ENCODE measurements at regions of chr1 and their contacts with region 1.

Region 1: GRCh38 chr1:186375088-186375953 is at the starts of genes ODR4 and TPR:
- DNase-seq: peak; percentile 98
- ATAC-seq: peak; percentile 89
- H3K4me3 Mint-ChIP-seq: peak within 1 kb of the TSS; percentile 99
- H3K27ac Mint-ChIP-seq: peak within 1 kb of the TSS; percentile 97
- H3K4me1 Mint-ChIP-seq: peaks cover 35% of the 10 kb centered on the region
- H3K27me3 Mint-ChIP-seq: no peaks in the 10 kb centered on the region
- total RNA-seq, gene ODR4: 10.7 to 12.2 TPM
- total RNA-seq, gene TPR: 130 to 139 TPM

Region 2: DNA sequence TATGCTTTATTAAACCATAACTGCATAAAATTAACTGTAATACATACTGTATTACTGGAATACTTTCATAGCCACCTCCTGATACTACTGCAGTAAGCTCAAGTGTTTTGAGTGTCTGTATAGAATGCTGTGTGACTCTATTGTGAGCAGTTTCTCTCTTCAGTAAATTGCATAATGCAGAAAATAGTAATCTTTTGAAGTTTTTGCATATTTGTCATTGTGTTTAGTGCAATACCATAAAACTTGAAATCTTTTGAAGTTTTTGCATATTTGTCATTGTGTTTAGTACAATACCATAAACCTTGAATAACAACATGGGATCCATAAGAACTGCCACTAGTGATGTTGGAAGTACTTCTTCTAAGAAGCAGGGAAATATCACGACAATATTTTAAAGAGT is 11.4 kb before region 1 on chr1:
- CTCF ChIA-PET with region 1: interaction called, 11 read pairs
- DNase-seq: no peak
- ATAC-seq: no peak
- H3K4me3 Mint-ChIP-seq: no peak overlapping the region
- H3K27ac Mint-ChIP-seq: no peak overlapping the region
- H3K4me1 Mint-ChIP-seq: peaks cover 2% of the 10 kb centered on the region
- H3K27me3 Mint-ChIP-seq: no peaks in the 10 kb centered on the region

Region 3: DNA sequence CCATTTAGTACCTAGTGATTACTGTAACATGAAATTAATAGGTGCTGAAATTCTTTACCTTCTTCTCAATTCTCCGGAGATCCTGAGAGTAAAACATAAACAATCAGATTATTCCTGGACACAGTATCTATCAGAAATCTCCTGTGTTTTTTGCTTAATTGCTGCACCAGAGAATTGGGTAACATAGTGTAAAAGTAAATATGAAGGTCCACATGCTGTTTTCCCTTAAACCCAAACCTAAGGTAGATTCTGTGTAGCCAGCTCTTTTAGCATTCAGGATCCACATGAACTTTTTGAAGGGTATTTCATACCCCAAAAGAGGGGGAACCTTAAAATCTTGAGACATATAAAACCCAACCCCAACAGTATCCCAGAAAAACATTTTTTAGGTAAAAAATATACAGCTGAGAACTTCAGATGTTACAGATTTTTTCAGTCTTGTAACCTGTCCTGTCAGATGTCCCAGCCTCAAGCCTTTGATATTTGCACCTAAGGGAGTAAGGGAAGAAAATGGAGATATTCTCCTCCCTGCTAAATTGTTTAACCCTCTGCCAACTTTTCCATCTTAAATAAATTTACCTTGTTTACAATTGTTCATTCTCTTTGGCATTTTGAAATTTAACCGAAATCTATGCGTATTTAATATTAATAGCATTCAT is 11.5 kb after region 1 on chr1:
- CTCF ChIA-PET with region 1: interaction called, 12 read pairs
- DNase-seq: no peak
- ATAC-seq: no peak
- H3K4me3 Mint-ChIP-seq: no peak overlapping the region
- H3K27ac Mint-ChIP-seq: no peak overlapping the region
- H3K4me1 Mint-ChIP-seq: peaks cover 2% of the 10 kb centered on the region
- H3K27me3 Mint-ChIP-seq: no peaks in the 10 kb centered on the region

Region 4: GRCh38 chr1:186404454-186405051 is 29.2 kb after region 1 on chr1:
- CTCF ChIA-PET with region 1: interaction called, 11 read pairs
- DNase-seq: no peak
- ATAC-seq: peak; percentile 70
- H3K4me3 Mint-ChIP-seq: no peak overlapping the region
- H3K27ac Mint-ChIP-seq: no peak overlapping the region
- H3K4me1 Mint-ChIP-seq: peaks cover 10% of the 10 kb centered on the region
- H3K27me3 Mint-ChIP-seq: no peaks in the 10 kb centered on the region